Activated CD4-positive, alpha-beta T cell treated with anti-CD3 and anti-CD28 coated beads, Interleukin-2, amount 10 ng/mL, durations not matched to agents 24 days and 14 days (primary cell): ENCODE measurements at regions of chr18 and their contacts with region 1.

Region 1: GRCh38 chr18:69935319-69936190 is 12.1 kb downstream of the CD226 start:
- DNase-seq: peak; percentile 93
- H3K4me3 Mint-ChIP-seq: no peak overlapping the region
- H3K27ac Mint-ChIP-seq: no peak overlapping the region
- H3K4me1 Mint-ChIP-seq: peaks cover 32% of the 10 kb centered on the region
- H3K27me3 Mint-ChIP-seq: peaks cover 2% of the 10 kb centered on the region

Region 2: DNA sequence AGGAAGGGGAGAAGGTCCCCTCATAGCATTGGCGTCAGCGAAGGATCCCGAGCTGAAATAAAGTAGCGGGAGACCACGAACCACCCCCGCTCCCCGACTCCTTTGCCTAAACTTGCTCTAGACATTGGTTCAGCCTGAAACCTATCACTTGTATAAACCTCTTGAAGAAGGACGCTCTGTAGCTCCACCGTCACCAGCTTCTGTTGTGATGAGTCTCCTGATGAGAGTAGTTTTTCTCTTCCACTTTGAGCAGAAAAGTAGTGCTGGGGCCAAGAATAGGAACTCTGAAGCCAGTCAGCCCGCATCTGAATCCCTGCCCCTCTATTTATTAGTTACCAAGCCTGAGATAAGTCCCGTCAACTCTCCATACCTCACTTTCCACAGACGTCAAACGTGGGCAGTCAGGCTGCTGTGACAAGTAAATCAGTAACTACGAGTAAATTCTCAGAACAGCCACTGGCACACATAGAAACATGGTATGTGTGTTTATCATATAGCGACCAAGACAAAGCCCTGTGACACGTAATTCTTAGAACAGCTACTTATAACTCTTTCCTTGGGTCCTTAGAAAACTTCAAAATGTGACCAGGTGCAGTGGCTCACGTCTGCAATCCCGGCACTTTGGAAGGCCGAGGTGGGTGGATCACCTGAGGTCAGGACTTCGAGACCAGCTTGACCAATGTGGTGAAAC is 49.6 kb before region 1 on chr18:
- intact Hi-C with region 1: loop called (anchors 1 kb)
- DNase-seq: peak; percentile 84
- H3K4me3 Mint-ChIP-seq: peak overlapping the region; percentile 72
- H3K27ac Mint-ChIP-seq: peak overlapping the region; percentile 99
- H3K4me1 Mint-ChIP-seq: peaks cover 63% of the 10 kb centered on the region
- H3K27me3 Mint-ChIP-seq: no peaks in the 10 kb centered on the region

Region 3: DNA sequence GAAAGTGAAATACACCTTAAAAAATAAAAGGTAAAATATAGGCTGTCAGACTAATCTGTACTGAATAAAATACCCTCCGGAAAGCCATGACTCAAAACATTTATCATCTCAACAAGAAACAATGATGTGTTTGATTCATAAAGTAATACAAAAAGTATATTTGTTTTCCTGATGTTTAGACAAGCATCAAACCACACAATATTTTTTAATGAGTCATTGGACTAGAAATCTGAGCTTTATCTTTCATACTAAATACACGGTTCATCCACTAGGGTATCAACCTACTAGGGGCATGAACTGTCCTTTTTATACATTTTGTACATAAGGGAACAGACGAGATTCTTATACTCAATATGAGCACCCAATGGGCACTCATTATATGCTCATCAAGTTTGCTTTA is 19.1 kb before region 1 on chr18:
- intact Hi-C with region 1: loop called (anchors 2 kb)
- DNase-seq: no peak
- H3K4me3 Mint-ChIP-seq: no peak overlapping the region
- H3K27ac Mint-ChIP-seq: peak overlapping the region; percentile 9
- H3K4me1 Mint-ChIP-seq: peaks cover 49% of the 10 kb centered on the region
- H3K27me3 Mint-ChIP-seq: no peaks in the 10 kb centered on the region

Region 4: DNA sequence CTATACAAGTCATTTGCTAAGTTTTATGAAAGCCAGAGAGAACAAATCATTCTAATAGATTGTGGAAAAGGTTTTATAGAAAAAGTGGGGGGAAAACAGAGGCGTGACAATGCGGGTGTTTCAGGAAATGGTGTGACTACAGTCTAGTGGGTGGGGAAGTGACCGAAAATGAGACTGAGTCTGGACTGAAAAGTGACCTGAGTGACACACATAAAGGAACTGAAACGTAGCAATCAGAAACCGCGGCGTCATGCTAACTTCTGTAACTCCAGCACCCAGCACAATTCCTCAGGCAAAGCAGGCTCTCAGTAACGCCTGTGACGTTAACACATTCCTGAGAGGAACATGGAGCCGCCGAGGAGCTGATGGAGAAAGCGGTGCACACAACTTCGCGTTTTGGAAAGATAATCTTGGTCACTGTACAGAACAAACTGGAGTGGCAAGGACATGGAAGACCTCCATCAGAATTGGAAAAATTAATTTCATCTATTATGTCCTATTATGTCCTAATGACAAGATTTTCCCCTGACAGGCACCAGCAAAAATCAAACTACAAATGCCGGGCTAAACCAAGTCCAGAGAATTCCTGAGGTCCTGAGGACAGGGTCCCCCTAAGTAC is 13.5 kb after region 1 on chr18:
- intact Hi-C with region 1: loop called (anchors 1 kb)
- DNase-seq: peak; percentile 83
- H3K4me3 Mint-ChIP-seq: no peak overlapping the region
- H3K27ac Mint-ChIP-seq: no peak overlapping the region
- H3K4me1 Mint-ChIP-seq: peaks cover 42% of the 10 kb centered on the region
- H3K27me3 Mint-ChIP-seq: no peaks in the 10 kb centered on the region

Region 5: GRCh38 chr18:69958422-69958821 is 22.9 kb after region 1 on chr18:
- intact Hi-C with region 1: loop called (anchors 1 kb)
- DNase-seq: peak; percentile 73
- H3K4me3 Mint-ChIP-seq: no peak overlapping the region
- H3K27ac Mint-ChIP-seq: no peak overlapping the region
- H3K4me1 Mint-ChIP-seq: peaks cover 24% of the 10 kb centered on the region
- H3K27me3 Mint-ChIP-seq: no peaks in the 10 kb centered on the region

Region 6: DNA sequence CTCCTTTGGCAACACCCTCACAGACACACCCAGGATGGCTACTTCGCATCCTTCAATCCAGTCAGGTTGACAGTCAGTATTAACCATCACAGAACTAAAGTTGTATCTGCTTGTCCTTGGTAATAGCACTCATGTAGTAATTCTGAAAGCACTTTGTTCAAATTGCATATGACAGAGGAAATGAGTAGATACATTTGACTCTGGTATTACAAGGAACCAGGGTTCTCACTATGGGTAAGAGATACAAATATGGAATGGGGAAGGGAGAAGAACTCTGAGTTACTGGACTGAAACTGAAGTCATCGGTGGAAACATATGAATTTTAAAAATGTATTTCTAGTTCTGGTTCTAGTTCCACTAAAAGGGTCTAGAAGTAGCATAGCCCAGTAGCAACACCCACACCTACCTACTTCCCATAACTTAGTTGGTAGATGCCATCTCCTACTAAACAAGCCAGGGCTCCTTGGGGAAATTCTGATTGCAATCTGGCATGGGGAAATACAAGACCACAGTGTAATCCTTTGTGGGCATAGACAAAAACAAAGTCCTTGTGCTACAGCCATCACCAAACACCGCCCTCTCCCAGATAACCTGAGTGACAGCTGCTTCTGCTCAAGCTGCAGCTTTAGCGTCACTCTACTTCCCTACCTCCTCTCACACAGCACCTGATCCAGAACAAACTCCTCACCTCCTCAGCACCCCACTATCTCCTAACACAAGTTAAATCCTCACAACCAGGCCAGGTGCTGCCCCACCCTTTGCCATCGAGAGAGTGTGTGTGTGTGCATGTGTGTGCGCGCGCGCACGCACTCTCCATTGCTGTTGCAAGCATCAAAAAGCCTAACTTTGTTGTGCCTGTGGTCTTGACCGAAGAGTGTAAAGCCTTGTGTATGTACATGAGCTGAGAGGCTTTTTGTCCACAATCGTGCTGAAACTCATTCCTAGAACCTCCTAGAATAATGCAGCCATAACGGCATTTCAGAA is 43.5 kb after region 1 on chr18:
- intact Hi-C with region 1: loop called (anchors 2 kb)
- DNase-seq: peak; percentile 52
- H3K4me3 Mint-ChIP-seq: no peak overlapping the region
- H3K27ac Mint-ChIP-seq: peak overlapping the region; percentile 51
- H3K4me1 Mint-ChIP-seq: peaks cover 34% of the 10 kb centered on the region
- H3K27me3 Mint-ChIP-seq: no peaks in the 10 kb centered on the region